Panc1 (cell line): ENCODE measurements at regions of chr13 and their contacts with region 1.

Region 1: GRCh38 chr13:36431654-36432511 is at the start of gene CCNA1:
- DNase-seq: no peak
- ATAC-seq: 0 out of 2 replicates have a peak, but pooled peaks have one; percentile 42
- H3K4me3 ChIP-seq: peak within 1 kb of the TSS in 1 of 2 experiments; percentile 16; a peak in 2 of 4 replicates
- H3K27ac ChIP-seq: no peak within 1 kb of the TSS
- H3K4me1 ChIP-seq: no peaks in the 10 kb centered on the region
- H3K27me3 ChIP-seq: no peaks in the 10 kb centered on the region
- CTCF ChIP-seq: no peak
- total RNA-seq, gene CCNA1: not detected

Region 2: GRCh38 chr13:36412736-36413135 is 19.1 kb before region 1 on chr13:
- CTCF ChIA-PET with region 1: interaction called, 17 read pairs
- POLR2A ChIA-PET with region 1: interaction called, 3 read pairs
- in situ Hi-C with region 1: no loop called
- intact Hi-C with region 1: no loop called
- DNase-seq: no peak
- ATAC-seq: no peak
- H3K4me3 ChIP-seq: no peak overlapping the region
- H3K27ac ChIP-seq: no peak overlapping the region
- H3K4me1 ChIP-seq: no peaks in the 10 kb centered on the region; the same call in 1 of the 2 replicates
- H3K27me3 ChIP-seq: no peaks in the 10 kb centered on the region
- CTCF ChIP-seq: no peak

Region 3: DNA sequence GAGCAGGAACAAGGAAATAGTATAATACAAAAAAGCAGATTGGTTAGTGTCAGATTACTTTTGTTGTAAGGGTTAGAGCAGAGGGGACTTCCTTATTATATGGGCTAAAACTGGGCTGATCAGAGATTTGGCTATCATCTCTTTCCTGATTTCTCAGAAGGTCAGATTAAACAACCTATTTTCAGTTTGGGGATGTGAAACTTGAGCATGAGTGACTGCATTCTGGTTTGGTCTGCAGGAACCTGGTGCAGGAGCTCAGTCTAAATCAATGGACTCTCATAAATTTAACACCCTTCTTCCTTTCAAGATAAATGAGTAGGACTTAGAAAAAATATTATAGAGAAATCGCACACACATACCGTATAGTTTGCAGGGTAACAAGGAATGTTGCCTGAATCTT is 374.2 kb after region 1 on chr13:
- CTCF ChIA-PET with region 1: no interaction called
- POLR2A ChIA-PET with region 1: no interaction called
- in situ Hi-C with region 1: no loop called
- intact Hi-C with region 1: no loop called
- DNase-seq: no peak
- ATAC-seq: no peak
- H3K4me3 ChIP-seq: no peak overlapping the region
- H3K27ac ChIP-seq: no peak overlapping the region
- H3K4me1 ChIP-seq: no peaks in the 10 kb centered on the region
- H3K27me3 ChIP-seq: no peaks in the 10 kb centered on the region
- CTCF ChIP-seq: no peak